Adrenal gland (tissue), 19 donors: ENCODE measurements at regions of chr20 and their contacts with region 1.

Region 1: GRCh38 chr20:40962730-40963504 is 65.7 kb upstream of the TOP1 start:
- DNase-seq: peak; percentile 69 to 87 (median 72)
- H3K4me3 ChIP-seq: no peak overlapping the region
- H3K27ac ChIP-seq: no peak overlapping the region
- H3K4me1 ChIP-seq: peaks cover 0 to 3% of the 10 kb centered on the region in 2 donors
- H3K27me3 ChIP-seq: no peaks in the 10 kb centered on the region
- CTCF ChIP-seq: peak; percentile 84 to 98 (median 88)
- POLR2A ChIP-seq: no peak

Region 2: GRCh38 chr20:40702504-40702903 is 260.4 kb before region 1 on chr20:
- intact Hi-C with region 1: no loop called
- DNase-seq: no peak
- H3K4me3 ChIP-seq: no peak overlapping the region
- H3K27ac ChIP-seq: no peak overlapping the region
- H3K4me1 ChIP-seq: no peaks in the 10 kb centered on the region
- H3K27me3 ChIP-seq: no peaks in the 10 kb centered on the region
- CTCF ChIP-seq: no peak
- POLR2A ChIP-seq: no peak

Region 3: DNA sequence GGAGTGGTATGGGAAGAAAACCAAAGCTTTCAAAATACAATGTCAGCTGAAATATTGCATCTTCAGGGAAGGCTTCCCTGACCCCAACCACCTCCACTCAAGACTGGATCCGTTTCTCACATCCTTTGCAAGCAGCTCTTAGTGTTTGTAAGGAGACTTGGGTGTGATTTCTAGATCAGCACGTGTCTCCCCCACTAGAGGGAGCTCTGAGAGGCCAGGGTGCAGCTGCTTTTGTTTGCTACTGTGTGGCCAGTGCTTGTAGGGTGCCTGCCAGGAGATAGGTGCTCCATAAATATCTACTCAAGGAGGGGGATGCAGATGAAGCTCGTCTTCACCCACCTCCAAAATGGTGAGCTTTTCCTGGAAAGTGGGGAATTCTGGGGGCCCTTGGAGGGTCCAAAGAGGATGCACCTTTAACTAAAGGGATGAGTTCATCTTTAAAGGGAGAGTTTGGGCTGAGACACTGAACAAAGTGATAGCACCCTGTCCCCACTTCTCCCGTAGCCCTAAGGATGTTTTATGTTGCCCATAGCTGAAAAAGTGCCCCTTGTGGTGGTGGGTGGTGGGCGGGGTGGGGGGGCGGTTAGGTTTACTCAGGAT is 221.3 kb before region 1 on chr20:
- intact Hi-C with region 1: loop called in 1 of 2 experiments (anchors 5 kb)
- DNase-seq: peak; percentile 43 to 77 (median 55)
- H3K4me3 ChIP-seq: no peak overlapping the region
- H3K27ac ChIP-seq: no peak overlapping the region
- H3K4me1 ChIP-seq: no peaks in the 10 kb centered on the region
- H3K27me3 ChIP-seq: no peaks in the 10 kb centered on the region
- CTCF ChIP-seq: peak; percentile 24 to 63 (median 57)
- POLR2A ChIP-seq: no peak

Region 4: GRCh38 chr20:40851051-40851450 is 111.9 kb before region 1 on chr20:
- intact Hi-C with region 1: no loop called
- DNase-seq: no peak
- H3K4me3 ChIP-seq: no peak overlapping the region
- H3K27ac ChIP-seq: no peak overlapping the region
- H3K4me1 ChIP-seq: no peaks in the 10 kb centered on the region
- H3K27me3 ChIP-seq: no peaks in the 10 kb centered on the region
- CTCF ChIP-seq: no peak
- POLR2A ChIP-seq: no peak

Region 5: DNA sequence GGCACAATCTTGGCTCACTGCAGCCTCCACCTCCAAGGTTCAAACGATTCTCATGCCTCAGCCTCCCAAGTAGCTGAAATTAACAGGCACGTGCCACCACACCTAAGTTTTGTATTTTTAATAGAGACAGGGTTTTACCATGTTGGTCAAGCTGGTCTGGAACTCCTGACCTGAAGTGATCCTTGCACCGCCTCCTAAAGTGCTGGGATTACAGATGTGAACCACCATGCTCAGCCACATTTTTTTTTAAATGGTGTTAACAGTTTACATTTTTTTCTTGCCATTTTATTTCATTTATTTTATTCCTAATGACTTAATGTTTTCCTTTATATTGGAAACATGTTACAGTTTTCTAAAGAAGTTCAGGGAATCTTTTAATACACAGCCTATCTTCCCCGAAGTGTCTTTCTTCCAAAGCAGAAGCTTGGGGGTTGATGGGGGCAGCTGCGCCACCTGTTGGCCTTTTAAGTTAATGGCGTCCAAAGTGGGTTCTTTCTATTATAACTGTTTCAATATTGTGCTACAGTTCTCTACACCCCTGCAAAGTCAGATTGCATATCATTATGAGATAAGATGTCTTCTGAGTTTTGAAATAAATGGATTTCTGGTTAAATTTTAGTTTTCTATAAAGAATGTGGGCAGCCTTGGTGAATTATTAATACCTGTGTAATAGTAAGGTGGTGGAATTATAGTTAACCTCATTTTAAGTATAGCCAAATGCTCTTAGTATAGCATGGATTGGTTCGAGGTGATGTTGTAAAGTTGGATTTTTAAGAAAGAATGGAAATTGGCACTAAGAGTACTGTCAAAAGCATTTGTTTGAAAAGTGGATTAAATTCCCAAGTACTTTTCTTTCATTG is 132.4 kb after region 1 on chr20:
- intact Hi-C with region 1: loop called in 1 of 2 experiments (anchors 5 kb)
- DNase-seq: peak; percentile 33 to 86 (median 68)
- H3K4me3 ChIP-seq: no peak overlapping the region
- H3K27ac ChIP-seq: no peak overlapping the region
- H3K4me1 ChIP-seq: peaks cover 0 to 20% of the 10 kb centered on the region in 2 donors
- H3K27me3 ChIP-seq: no peaks in the 10 kb centered on the region
- CTCF ChIP-seq: peak; percentile 77 to 85 (median 83)
- POLR2A ChIP-seq: no peak